Transverse colon (tissue), 4 donors: ENCODE measurements at regions of chr12 and their contacts with region 1.

Region 1: GRCh38 chr12:6335451-6336078 is 6.3 kb downstream of the TNFRSF1A start:
- DNase-seq: peak; percentile 84
- H3K4me3 ChIP-seq: peak overlapping the region; percentile 20 to 84 (median 29)
- H3K27ac ChIP-seq: peak overlapping the region; percentile 94 to 99 (median 98)
- H3K4me1 ChIP-seq: peaks cover 39 to 88% (median 77%) of the 10 kb centered on the region in 4 donors
- H3K27me3 ChIP-seq: no peaks in the 10 kb centered on the region
- CTCF ChIP-seq: peak; percentile 28 to 74 (median 47)
- EP300 ChIP-seq: no peak
- POLR2A ChIP-seq: peak; percentile 10

Region 2: DNA sequence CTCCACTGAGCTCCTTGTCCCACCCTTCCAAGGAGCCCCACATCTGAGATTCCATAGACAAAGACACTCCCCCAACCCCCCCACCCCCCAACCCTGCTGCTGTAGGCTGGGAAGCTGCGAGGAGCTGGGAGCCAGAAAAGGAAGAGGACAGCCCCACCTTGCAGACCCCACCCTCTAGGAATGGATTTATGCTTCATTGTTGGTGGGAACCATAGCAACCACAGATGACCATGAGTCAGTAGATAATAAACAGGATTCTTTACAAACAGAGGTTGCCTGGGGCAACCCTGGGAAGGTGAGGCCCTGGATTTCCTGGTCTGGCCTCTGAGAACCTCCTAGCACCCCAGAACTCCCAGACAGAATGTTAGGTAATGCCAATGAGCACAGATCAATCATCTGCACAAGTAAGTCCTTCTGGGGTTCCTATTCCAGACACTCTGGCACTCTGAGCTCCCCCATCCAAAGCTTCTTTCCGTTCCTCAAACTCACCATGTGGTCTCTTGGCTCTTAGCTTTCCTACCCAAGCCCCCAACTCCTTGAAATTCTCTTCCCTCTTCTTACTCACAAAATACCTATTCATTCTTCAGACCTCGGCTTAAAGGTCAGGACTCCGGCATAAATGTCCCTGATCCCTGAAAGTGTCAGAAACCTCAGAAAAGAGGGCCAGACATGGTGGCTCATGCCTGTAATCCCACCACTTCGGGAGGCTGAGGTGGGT is 40.3 kb before region 1 on chr12:
- in situ Hi-C with region 1: no loop called
- intact Hi-C with region 1: no loop called
- DNase-seq: peak; percentile 83
- H3K4me3 ChIP-seq: peak overlapping the region in 1 of 4 donors; percentile 15
- H3K27ac ChIP-seq: peak overlapping the region; percentile 87 to 96 (median 90)
- H3K4me1 ChIP-seq: peaks cover 20 to 62% (median 37%) of the 10 kb centered on the region in 4 donors
- H3K27me3 ChIP-seq: no peaks in the 10 kb centered on the region
- CTCF ChIP-seq: no peak
- EP300 ChIP-seq: peak; percentile 97
- POLR2A ChIP-seq: peak; percentile 44

Region 3: GRCh38 chr12:6383572-6384498 is 48.3 kb after region 1 on chr12 and contains the start of gene LTBR:
- in situ Hi-C with region 1: no loop called
- intact Hi-C with region 1: loop called (anchors 5 kb)
- DNase-seq: peak; percentile 96
- H3K4me3 ChIP-seq: peak within 1 kb of the TSS; percentile 55 to 87 (median 68)
- H3K27ac ChIP-seq: peak within 1 kb of the TSS; percentile 94 to 97 (median 95)
- H3K4me1 ChIP-seq: peaks cover 16 to 62% (median 38%) of the 10 kb centered on the region in 4 donors
- H3K27me3 ChIP-seq: no peaks in the 10 kb centered on the region
- CTCF ChIP-seq: no peak
- EP300 ChIP-seq: no peak
- POLR2A ChIP-seq: peak; percentile 93
- total RNA-seq, gene LTBR: 148 to 367 (median 208) TPM

Region 4: DNA sequence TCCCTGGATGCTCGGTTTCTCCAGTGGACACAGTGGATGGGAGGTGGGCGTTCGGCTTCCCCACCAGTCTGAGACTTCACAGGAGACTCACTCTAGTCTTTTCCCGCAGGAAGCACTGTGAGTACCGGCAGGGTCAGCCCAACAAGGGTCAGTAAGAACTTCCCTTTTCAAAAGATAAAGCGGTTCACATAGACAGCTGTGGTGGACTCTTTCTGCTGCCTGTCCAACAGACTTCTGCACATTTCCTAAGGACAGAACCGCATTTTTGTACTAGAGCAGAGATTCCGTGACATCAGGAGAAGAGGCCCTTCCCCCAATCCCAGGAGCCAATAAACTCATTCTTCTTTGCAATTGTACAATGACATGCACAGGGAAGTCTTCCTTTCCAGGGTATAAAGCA is 58.8 kb after region 1 on chr12:
- in situ Hi-C with region 1: no loop called
- intact Hi-C with region 1: no loop called
- DNase-seq: no peak
- H3K4me3 ChIP-seq: no peak overlapping the region
- H3K27ac ChIP-seq: peak overlapping the region; percentile 87 to 92 (median 90)
- H3K4me1 ChIP-seq: peaks cover 18 to 51% (median 44%) of the 10 kb centered on the region in 4 donors
- H3K27me3 ChIP-seq: no peaks in the 10 kb centered on the region
- CTCF ChIP-seq: no peak
- EP300 ChIP-seq: no peak
- POLR2A ChIP-seq: peak; percentile 35

Region 5: DNA sequence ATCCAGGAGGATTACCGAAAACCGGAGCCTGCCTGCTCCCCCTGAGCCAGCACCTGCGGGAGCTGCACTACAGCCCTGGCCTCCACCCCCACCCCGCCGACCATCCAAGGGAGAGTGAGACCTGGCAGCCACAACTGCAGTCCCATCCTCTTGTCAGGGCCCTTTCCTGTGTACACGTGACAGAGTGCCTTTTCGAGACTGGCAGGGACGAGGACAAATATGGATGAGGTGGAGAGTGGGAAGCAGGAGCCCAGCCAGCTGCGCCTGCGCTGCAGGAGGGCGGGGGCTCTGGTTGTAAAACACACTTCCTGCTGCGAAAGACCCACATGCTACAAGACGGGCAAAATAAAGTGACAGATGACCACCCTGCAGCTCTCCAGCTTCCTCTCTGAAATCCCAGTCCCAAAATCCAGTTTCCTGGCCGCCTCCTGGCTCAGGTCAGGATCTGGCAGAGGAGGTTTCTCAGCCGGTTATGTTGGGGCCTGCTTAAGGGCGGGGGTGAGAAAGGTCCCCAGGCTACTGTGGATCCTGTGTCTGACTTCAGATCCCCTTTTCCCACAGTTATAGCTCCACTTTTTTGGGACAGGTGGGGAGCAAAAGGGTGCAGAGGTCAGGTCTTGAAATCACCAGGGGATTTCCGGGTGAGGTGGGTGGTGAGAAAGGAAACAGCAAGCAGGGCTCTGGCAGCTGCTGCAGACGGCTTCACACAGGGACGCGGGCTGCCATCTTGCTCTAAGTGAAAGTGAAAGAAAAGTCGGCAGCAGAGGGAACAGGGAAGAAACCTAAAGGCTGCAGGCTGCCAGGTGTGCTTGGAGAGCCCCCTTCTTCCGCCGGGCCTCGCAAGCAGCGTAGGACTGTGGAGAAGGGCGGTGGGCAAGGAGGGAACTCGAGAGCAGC is 116.0 kb after region 1 on chr12 and contains the start of gene TAPBPL:
- in situ Hi-C with region 1: loop called in 3 of 4 experiments (anchors 10 to 25 kb)
- intact Hi-C with region 1: no loop called
- DNase-seq: peak; percentile 89
- H3K4me3 ChIP-seq: peak within 1 kb of the TSS; percentile 65 to 78 (median 73)
- H3K27ac ChIP-seq: peak within 1 kb of the TSS; percentile 97 to 99 (median 98)
- H3K4me1 ChIP-seq: peaks cover 16 to 34% (median 26%) of the 10 kb centered on the region in 4 donors
- H3K27me3 ChIP-seq: no peaks in the 10 kb centered on the region
- CTCF ChIP-seq: peak in 1 of 5 experiments; percentile 8
- EP300 ChIP-seq: no peak
- POLR2A ChIP-seq: peak; percentile 78
- total RNA-seq, gene TAPBPL: 47.6 to 99.1 (median 79.3) TPM

Region 6: GRCh38 chr12:6470375-6471163 is 135.0 kb after region 1 on chr12 and contains the start of gene VAMP1:
- in situ Hi-C with region 1: loop called in 2 of 4 experiments (anchors 25 kb)
- intact Hi-C with region 1: no loop called
- DNase-seq: peak; percentile 98
- H3K4me3 ChIP-seq: peak within 1 kb of the TSS; percentile 49 to 78 (median 64)
- H3K27ac ChIP-seq: peak within 1 kb of the TSS; percentile 88 to 96 (median 90)
- H3K4me1 ChIP-seq: peaks cover 8 to 40% (median 33%) of the 10 kb centered on the region in 4 donors
- H3K27me3 ChIP-seq: no peaks in the 10 kb centered on the region
- CTCF ChIP-seq: peak in 1 of 5 experiments; percentile 36
- EP300 ChIP-seq: no peak
- POLR2A ChIP-seq: peak; percentile 99
- total RNA-seq, gene VAMP1: 2.6 to 23.1 (median 17.7) TPM

Region 7: DNA sequence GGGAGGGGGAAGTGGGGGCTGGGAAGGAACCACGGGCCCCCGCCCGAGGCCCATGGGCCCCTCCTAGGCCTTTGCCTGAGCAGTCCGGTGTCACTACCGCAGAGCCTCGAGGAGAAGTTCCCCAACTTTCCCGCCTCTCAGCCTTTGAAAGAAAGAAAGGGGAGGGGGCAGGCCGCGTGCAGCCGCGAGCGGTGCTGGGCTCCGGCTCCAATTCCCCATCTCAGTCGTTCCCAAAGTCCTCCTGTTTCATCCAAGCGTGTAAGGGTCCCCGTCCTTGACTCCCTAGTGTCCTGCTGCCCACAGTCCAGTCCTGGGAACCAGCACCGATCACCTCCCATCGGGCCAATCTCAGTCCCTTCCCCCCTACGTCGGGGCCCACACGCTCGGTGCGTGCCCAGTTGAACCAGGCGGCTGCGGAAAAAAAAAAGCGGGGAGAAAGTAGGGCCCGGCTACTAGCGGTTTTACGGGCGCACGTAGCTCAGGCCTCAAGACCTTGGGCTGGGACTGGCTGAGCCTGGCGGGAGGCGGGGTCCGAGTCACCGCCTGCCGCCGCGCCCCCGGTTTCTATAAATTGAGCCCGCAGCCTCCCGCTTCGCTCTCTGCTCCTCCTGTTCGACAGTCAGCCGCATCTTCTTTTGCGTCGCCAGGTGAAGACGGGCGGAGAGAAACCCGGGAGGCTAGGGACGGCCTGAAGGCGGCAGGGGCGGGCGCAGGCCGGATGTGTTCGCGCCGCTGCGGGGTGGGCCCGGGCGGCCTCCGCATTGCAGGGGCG is 198.5 kb after region 1 on chr12 and contains the start of gene GAPDH:
- in situ Hi-C with region 1: loop called in 1 of 4 experiments (anchors 25 kb)
- intact Hi-C with region 1: no loop called
- DNase-seq: peak; percentile 94
- H3K4me3 ChIP-seq: peak within 1 kb of the TSS; percentile 72 to 88 (median 78)
- H3K27ac ChIP-seq: peak within 1 kb of the TSS; percentile 94 to 98 (median 98)
- H3K4me1 ChIP-seq: peaks cover 31 to 60% (median 42%) of the 10 kb centered on the region in 4 donors
- H3K27me3 ChIP-seq: no peaks in the 10 kb centered on the region
- CTCF ChIP-seq: no peak
- EP300 ChIP-seq: no peak
- POLR2A ChIP-seq: peak; percentile 99
- total RNA-seq, gene GAPDH: 1,806 to 2,946 (median 2,333) TPM

Region 8: DNA sequence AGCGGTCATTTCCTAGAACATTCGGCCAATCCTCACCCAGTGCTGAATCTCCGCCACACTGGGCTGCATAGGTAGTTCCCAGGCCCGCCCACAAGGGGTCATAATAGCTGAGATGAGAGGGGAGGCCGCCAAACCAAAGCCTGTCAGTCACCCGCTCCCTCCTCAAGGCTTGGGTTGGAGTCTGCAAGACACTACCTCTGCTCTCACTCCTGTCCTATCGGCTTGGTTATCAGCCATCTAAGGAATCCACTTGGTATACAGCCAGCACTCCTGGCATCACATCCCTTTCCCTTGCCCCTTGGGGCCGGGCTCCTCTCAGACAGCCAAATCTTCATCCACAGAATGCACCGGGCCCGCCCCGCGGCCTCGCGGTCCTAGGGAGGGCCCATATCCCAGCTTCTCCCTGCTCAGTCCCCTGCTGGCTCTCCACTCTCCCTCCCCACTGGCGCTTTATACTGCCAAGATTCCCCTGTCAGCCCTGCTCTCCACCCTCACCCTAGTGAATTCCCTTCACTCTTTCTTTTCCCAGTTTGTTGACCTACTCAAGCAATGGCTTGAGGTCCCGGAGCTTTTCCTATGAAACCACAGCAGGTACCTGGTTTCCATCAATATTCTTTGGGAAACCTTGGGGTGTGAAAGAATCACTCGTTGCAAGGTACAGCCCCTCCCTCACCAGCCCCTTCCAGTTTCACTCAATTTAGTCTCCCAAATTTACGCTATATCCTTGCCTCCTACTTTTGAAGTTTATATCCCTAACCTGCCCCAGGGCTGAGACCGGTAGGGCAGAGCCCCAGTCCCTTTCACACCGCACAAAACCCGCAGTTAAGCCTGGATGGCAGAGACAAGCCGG is 218.8 kb after region 1 on chr12:
- in situ Hi-C with region 1: loop called in 1 of 4 experiments (anchors 25 kb)
- intact Hi-C with region 1: loop called (anchors 10 kb)
- DNase-seq: peak; percentile 79
- H3K4me3 ChIP-seq: peak overlapping the region; percentile 26 to 76 (median 70)
- H3K27ac ChIP-seq: peak overlapping the region; percentile 75 to 91 (median 83)
- H3K4me1 ChIP-seq: peaks cover 37 to 63% (median 44%) of the 10 kb centered on the region in 4 donors
- H3K27me3 ChIP-seq: no peaks in the 10 kb centered on the region
- CTCF ChIP-seq: peak; percentile 54 to 63 (median 58)
- EP300 ChIP-seq: no peak
- POLR2A ChIP-seq: no peak